Natural killer cell (primary cell): ENCODE measurements at regions of chr2 and their contacts with region 1.

Region 1: DNA sequence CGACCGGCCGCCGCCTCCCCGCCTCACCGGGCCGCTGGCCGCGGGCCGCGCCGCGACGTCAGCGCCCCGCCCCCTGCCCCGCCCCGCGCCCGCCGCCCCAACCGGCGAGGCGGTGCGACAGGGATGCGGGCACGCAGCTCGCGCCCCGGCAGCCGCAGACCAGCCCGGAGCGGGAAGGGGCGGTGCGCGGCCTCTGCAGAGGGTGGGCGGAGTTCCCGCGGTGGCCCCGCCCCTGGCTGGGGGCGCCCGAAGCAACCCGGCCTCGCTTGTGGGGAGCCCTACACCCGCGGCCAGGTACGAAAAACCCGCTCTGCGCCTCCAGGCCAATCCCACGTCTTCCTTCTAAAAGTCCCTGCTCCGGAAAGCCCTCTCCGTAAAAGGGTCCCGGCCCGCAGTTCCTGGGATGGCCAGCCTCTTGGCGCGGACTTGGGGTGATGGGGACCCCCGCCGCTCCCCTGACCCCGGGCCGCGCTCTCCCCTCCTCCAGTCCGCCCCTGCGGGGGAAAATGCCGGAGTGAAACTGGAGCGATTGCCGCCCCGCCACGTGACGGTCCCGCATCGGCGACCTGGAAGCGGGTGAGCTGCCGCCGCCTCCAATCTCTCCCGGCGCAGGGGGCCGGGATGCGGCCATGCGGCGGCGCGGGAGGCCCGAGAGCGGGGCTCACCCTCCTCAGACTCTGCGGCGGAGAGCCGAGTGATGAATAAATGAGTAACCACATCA is at the start of gene RAB11FIP5:
- DNase-seq: peak; percentile 74 to 89
- ATAC-seq: peak; percentile 81 to 89 (median 88)
- H3K4me3 ChIP-seq: peak within 1 kb of the TSS; percentile 77
- H3K4me3 Mint-ChIP-seq: peak within 1 kb of the TSS; percentile 90
- H3K27ac ChIP-seq: peak within 1 kb of the TSS; percentile 31
- H3K27ac Mint-ChIP-seq: peak within 1 kb of the TSS in 1 of 2 donors; percentile 77
- H3K4me1 ChIP-seq: peaks cover 17% of the 10 kb centered on the region
- H3K4me1 Mint-ChIP-seq: peaks cover 6 to 23% of the 10 kb centered on the region in 2 donors
- H3K27me3 ChIP-seq: peaks cover 4% of the 10 kb centered on the region
- H3K27me3 Mint-ChIP-seq: peaks cover 0 to 13% of the 10 kb centered on the region in 2 donors
- CTCF ChIP-seq: no peak
- total RNA-seq, gene RAB11FIP5: 4.9 to 15.9 (median 11.2) TPM

Region 2: DNA sequence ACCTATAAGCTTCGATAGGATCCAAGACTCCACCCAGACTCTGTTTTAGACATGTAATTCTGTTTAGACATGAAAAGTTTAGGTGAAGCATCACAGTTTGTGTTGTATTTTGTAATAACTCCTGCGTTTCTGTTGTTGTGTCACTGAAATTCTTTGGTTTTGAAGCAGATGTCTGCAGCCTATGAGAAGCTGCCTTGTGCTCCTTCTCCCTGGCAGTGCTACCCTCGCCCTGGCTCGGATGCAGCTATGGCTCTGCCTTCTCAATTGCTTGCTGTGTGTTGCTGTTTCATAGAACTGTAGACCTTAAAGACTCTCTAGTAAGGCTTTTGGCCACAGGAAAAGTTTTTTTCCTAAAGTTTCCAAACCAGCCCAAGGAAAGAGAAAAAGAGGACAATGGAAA is 1821.7 kb before region 1 on chr2:
- intact Hi-C with region 1: no loop called
- DNase-seq: no peak
- ATAC-seq: no peak
- H3K4me3 ChIP-seq: no peak overlapping the region
- H3K4me3 Mint-ChIP-seq: no peak overlapping the region
- H3K27ac ChIP-seq: no peak overlapping the region
- H3K27ac Mint-ChIP-seq: no peak overlapping the region
- H3K4me1 ChIP-seq: no peaks in the 10 kb centered on the region
- H3K4me1 Mint-ChIP-seq: peaks cover 6 to 7% of the 10 kb centered on the region in 2 donors
- H3K27me3 ChIP-seq: no peaks in the 10 kb centered on the region
- H3K27me3 Mint-ChIP-seq: no peaks in the 10 kb centered on the region
- CTCF ChIP-seq: no peak

Region 3: GRCh38 chr2:71700658-71701397 is 1412.2 kb before region 1 on chr2:
- intact Hi-C with region 1: no loop called
- DNase-seq: no peak
- ATAC-seq: no peak
- H3K4me3 ChIP-seq: no peak overlapping the region
- H3K4me3 Mint-ChIP-seq: no peak overlapping the region
- H3K27ac ChIP-seq: no peak overlapping the region
- H3K27ac Mint-ChIP-seq: no peak overlapping the region
- H3K4me1 ChIP-seq: no peaks in the 10 kb centered on the region
- H3K4me1 Mint-ChIP-seq: no peaks in the 10 kb centered on the region
- H3K27me3 ChIP-seq: no peaks in the 10 kb centered on the region
- H3K27me3 Mint-ChIP-seq: no peaks in the 10 kb centered on the region
- CTCF ChIP-seq: no peak

Region 4: GRCh38 chr2:73071360-73072133 is 41.5 kb before region 1 on chr2 and contains the start of gene SFXN5:
- intact Hi-C with region 1: loop called (anchors 1 kb)
- DNase-seq: peak; percentile 95 to 99
- ATAC-seq: peak; percentile 86 to 94 (median 89)
- H3K4me3 ChIP-seq: peak within 1 kb of the TSS; percentile 98
- H3K4me3 Mint-ChIP-seq: peak within 1 kb of the TSS; percentile 93
- H3K27ac ChIP-seq: peak within 1 kb of the TSS; percentile 95
- H3K27ac Mint-ChIP-seq: peak within 1 kb of the TSS; percentile 91 to 92
- H3K4me1 ChIP-seq: peaks cover 16% of the 10 kb centered on the region
- H3K4me1 Mint-ChIP-seq: peaks cover 38 to 40% of the 10 kb centered on the region in 2 donors
- H3K27me3 ChIP-seq: no peaks in the 10 kb centered on the region
- H3K27me3 Mint-ChIP-seq: no peaks in the 10 kb centered on the region
- CTCF ChIP-seq: no peak
- total RNA-seq, gene SFXN5: 15.3 to 22.3 (median 19.8) TPM

Region 5: DNA sequence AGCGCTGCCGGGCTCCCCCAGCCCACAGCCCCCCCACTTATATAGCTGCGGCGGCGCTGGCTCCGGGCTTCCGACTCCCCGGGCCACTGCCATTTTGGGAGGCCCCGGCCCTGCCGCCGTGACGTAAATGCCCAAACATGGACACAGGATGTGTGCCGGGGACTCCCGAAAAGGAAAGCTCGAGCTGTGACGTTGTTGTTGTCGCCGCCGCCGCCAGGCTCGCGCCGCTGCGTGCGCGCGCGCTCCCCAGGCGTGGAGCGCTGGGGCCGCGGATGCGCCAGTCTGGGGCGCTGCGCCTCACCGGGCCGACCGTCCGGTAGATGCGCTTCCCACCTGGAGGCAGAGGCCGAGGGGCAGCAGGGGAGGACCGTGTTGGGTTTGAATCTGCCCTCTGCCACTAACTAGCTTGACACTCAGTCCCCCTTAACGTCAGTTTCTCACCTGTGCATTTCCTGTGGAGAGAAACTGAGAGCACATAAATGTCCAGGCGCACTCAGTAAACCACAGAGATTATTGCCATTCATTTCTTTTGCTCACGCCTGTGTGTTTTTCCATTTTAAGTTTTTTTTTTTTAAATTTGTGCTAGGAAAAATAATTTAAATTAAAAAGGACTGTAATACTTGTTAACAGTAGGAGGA is 180.6 kb after region 1 on chr2 and contains the start of gene EGR4:
- intact Hi-C with region 1: no loop called
- DNase-seq: peak; percentile 85 to 95
- ATAC-seq: peak; percentile 93 to 95 (median 94)
- H3K4me3 ChIP-seq: peak within 1 kb of the TSS; percentile 30
- H3K4me3 Mint-ChIP-seq: peak within 1 kb of the TSS; percentile 72
- H3K27ac ChIP-seq: no peak within 1 kb of the TSS
- H3K27ac Mint-ChIP-seq: peak within 1 kb of the TSS in 1 of 2 donors; percentile 75
- H3K4me1 ChIP-seq: peaks cover 26% of the 10 kb centered on the region
- H3K4me1 Mint-ChIP-seq: peaks cover 7 to 8% of the 10 kb centered on the region in 2 donors
- H3K27me3 ChIP-seq: peaks cover 63% of the 10 kb centered on the region
- H3K27me3 Mint-ChIP-seq: peaks cover 59 to 62% of the 10 kb centered on the region in 2 donors
- CTCF ChIP-seq: no peak
- total RNA-seq, gene EGR4: 0.28 to 2.6 (median 1.1) TPM